H1 (cell line): ENCODE measurements at regions of chr11 and their contacts with region 1.

Region 1: DNA sequence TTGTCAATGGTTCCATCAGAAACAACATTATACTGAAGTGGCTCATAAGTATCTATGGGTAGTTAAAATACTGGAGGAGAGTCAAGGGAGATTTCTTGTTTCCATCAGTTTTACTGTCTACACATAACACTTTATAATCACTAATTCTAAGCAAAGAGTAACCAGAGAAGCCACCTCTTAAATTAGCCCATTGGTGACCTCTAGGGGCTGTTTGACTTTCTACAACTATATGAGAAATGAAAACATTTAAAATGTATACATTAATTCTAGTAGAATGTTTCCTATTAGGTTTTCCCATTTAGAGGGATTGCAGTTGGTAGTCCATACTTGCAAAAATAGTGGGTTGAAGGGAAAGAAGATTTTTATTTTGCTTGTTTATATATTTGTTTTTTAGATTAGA is 504.3 kb downstream of the FAM181B start:
- DNase-seq: no peak
- H3K4me3 ChIP-seq: no peak overlapping the region
- H3K27ac ChIP-seq: no peak overlapping the region
- H3K4me1 ChIP-seq: no peaks in the 10 kb centered on the region
- H3K27me3 ChIP-seq: no peaks in the 10 kb centered on the region
- CTCF ChIP-seq: peak in 2 of 3 experiments; percentile 38 to 40; a peak in 2 of 4 replicates
- EP300 ChIP-seq: no peak
- POLR2A ChIP-seq: no peak
- RAD21 ChIP-seq: peak; percentile 60 to 73

Region 2: DNA sequence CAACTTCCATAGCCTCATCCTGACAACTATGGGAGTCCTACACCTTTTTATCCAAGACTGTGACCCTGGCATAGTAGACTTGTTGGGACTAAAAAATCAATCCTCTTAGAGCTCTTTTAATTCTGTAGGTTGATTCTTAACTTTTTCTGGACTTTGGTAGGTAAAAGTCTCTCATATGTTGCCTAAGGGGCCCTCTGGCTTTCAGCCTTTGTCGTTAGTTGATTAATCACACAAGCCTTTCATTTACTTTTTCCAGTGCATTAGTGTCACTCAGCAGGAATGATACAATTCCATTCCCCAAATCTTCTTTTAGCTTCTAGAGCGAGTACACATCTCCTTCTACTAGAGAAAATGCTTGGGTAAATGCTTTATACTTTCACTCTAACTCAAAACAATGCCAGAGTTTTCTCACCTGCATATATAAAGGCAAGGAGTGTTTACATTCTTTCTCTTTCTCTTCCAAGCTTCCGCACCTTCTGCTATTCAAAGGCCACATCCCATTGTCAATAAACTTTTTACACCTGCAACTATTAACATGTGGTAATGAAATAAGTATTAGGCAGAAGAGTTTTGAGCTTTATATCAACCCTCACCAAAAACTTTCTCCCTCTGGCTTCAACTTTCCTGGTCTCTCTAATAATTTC is 12.3 kb before region 1 on chr11:
- CTCF ChIA-PET with region 1: interaction called, 13 read pairs
- POLR2A ChIA-PET with region 1: no interaction called
- DNase-seq: no peak
- H3K4me3 ChIP-seq: peak overlapping the region in 1 of 4 experiments; percentile 24; a peak in 1 of 8 replicates
- H3K27ac ChIP-seq: no peak overlapping the region
- H3K4me1 ChIP-seq: peaks cover 1 to 5% (median 2%) of the 10 kb centered on the region in 4 experiments; a peak in 3 of 7 replicates
- H3K27me3 ChIP-seq: no peaks in the 10 kb centered on the region
- CTCF ChIP-seq: no peak
- EP300 ChIP-seq: no peak
- POLR2A ChIP-seq: no peak
- RAD21 ChIP-seq: no peak